ACHN (cell line): ENCODE measurements at regions of chr18 and their contacts with region 1.

Region 1: DNA sequence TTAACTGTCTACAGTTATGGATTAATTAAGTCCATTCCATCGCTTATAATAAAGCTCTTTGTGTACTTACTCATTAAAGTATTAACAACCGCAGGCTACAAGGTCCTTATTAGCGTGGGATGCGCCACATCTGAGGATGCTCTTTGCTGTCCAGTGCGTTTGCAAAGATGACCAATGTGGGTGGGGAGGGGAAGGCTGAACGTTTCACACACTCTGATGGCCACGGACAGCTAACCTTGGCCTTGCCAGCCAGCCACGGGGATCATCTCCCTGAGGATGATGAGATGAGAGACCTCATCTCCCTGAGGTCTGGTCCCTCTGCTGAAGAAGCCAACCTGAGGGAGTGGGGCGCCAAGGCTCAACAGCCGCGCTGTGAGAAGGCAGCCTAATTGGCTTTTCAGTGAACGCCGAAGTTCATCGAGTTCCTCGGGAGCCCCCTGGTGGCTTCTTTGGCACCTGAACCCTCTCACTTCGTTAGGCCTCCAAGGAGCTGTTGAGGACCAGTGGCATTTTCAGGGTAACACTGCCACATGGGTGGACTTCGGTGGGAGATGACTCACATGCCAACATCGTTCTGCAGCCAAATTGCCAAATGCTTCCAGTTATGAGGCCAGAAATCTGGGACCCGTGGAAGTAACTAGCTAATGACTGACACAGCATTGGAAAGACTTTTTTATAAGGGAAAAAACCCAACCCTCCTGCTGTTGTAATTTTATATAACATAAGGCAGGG is 69.3 kb upstream of the SEC11C start:
- DNase-seq: peak; percentile 77

Region 2: GRCh38 chr18:58781627-58782194 is 288.6 kb before region 1 on chr18:
- in situ Hi-C with region 1: loop called (anchors 25 kb)
- DNase-seq: peak; percentile 68

Region 3: DNA sequence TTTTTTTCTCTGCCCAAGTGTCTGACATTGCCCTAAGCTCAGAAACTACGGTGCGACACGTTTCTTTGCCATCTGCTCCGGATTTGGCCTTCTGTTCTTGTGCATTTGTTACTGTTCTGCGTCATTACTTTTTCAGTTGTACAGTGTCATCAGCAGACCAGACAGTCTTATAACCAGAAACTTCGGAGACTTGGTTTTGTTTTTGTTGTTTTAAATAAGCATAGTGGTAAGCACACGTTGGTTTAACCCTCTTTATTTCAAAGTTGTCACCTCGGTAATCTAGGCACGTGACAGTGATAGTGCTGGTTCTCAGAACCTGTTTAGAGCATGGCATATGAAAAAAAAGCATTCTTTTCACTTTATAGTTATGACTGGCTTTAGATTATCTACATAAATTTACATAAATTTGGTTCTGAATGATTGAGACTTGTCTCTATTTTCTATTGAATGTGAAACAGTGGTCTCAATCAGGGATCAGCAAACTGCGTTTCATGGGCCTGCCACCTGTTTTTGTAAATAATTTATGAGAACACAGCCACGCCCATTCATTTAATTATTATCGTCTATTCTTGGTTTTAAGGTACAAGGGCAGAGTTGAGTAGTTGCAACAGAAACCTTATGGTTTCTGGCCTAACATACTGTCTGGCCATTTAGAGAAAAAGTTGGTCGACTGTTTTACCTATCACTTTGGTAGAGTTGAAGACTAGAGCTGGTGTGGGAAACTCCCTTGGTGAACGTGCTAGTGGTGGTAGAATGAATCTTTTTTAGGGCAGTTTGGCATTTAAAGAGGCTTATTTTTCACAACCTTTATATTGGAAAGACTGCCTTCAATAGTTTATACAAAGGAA is 99.2 kb before region 1 on chr18:
- in situ Hi-C with region 1: no loop called
- DNase-seq: no peak

Region 4: GRCh38 chr18:59293317-59293716 is 223.0 kb after region 1 on chr18:
- in situ Hi-C with region 1: no loop called
- DNase-seq: no peak